Right cardiac atrium (tissue), 5 donors: ENCODE measurements at regions of chr13 and their contacts with region 1.

Region 1: DNA sequence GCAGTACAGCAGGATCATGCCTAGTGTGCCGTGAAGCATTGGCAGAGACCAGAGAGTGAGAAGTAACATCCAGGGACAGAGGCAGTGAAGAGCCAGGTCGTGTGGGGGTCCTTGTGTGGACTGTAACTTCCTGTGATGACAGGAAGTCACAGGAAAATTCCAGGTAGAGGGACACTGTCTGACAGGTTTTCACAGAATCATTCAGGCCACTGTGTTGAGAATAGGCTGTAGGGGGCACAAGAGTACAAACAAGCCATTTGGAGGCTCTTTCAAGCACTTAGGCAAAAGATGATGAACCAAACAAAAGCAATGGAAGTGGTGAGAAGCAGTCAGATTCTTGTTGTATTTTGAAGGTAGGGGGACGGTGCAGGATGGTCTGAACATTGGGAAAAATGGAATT is 46.4 kb downstream of the N4BP2L1 start:
- DNase-seq: no peak
- ATAC-seq: peak; percentile 49 to 62
- H3K4me3 ChIP-seq: no peak overlapping the region
- H3K27ac ChIP-seq: no peak overlapping the region
- H3K4me1 ChIP-seq: no peaks in the 10 kb centered on the region
- H3K27me3 ChIP-seq: no peaks in the 10 kb centered on the region

Region 2: GRCh38 chr13:32211813-32212212 is 169.7 kb before region 1 on chr13:
- intact Hi-C with region 1: no loop called
- DNase-seq: no peak
- ATAC-seq: peak; percentile 54 to 61
- H3K4me3 ChIP-seq: no peak overlapping the region
- H3K27ac ChIP-seq: peak overlapping the region; percentile 82
- H3K4me1 ChIP-seq: no peaks in the 10 kb centered on the region
- H3K27me3 ChIP-seq: no peaks in the 10 kb centered on the region

Region 3: DNA sequence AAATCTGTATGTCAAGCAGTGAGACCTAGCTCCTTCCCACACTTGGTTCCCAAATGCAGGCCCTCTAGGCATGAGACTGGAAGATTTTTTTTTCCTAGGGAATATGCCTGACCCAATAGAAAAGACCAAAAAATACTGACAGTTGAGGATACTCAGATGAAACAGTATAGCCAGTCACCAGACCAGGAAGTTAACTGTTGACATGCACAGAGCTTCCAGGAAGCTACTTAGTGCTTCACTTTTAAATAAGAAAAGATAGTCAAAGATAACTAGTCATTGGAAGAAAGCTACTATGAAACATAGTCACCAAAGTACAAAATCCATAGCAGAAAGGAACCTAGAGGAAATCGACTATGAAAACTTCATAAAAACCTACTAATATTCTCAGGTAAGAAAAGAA is 33.9 kb before region 1 on chr13:
- intact Hi-C with region 1: no loop called
- DNase-seq: no peak
- ATAC-seq: no peak
- H3K4me3 ChIP-seq: no peak overlapping the region
- H3K27ac ChIP-seq: no peak overlapping the region
- H3K4me1 ChIP-seq: no peaks in the 10 kb centered on the region
- H3K27me3 ChIP-seq: no peaks in the 10 kb centered on the region

Region 4: GRCh38 chr13:32427852-32428580 is 46.5 kb after region 1 on chr13 and contains the start of gene N4BP2L1:
- intact Hi-C with region 1: no loop called
- DNase-seq: peak; percentile 67 to 88 (median 87)
- ATAC-seq: peak; percentile 84 to 85
- H3K4me3 ChIP-seq: peak within 1 kb of the TSS; percentile 74
- H3K27ac ChIP-seq: peak within 1 kb of the TSS; percentile 84
- H3K4me1 ChIP-seq: peaks cover 9% of the 10 kb centered on the region
- H3K27me3 ChIP-seq: no peaks in the 10 kb centered on the region
- total RNA-seq, gene N4BP2L1: 4.6 to 6.5 (median 5.0) TPM

Region 5: DNA sequence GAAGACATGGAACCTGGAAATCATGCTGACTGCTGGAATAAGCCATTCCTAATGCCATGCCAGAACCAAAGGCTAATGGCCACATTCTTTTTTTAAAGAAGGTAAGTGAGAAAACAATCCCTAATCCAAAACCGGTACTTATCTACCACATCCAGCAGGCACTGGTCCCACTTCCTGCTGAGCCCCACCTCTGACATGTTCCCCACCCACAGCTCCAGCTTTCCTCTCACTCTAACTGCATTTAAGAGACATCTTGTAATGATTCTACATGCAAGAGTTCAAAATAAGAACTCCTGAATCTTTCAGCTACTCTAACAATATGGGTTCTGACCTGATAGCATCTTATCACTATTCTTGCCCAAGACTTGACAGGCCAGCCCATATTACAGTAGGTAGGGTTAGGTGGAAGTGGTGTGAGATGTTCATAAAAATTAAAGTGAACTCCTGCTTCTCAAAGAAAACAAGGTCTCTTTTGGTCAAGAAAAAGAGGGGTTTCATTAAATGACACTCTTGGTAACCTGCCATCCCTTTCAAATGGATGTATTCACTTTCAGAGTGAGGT is 115.1 kb after region 1 on chr13:
- intact Hi-C with region 1: no loop called
- DNase-seq: no peak
- ATAC-seq: peak; percentile 32 to 69
- H3K4me3 ChIP-seq: no peak overlapping the region
- H3K27ac ChIP-seq: no peak overlapping the region
- H3K4me1 ChIP-seq: peaks cover 3% of the 10 kb centered on the region
- H3K27me3 ChIP-seq: no peaks in the 10 kb centered on the region

Region 6: DNA sequence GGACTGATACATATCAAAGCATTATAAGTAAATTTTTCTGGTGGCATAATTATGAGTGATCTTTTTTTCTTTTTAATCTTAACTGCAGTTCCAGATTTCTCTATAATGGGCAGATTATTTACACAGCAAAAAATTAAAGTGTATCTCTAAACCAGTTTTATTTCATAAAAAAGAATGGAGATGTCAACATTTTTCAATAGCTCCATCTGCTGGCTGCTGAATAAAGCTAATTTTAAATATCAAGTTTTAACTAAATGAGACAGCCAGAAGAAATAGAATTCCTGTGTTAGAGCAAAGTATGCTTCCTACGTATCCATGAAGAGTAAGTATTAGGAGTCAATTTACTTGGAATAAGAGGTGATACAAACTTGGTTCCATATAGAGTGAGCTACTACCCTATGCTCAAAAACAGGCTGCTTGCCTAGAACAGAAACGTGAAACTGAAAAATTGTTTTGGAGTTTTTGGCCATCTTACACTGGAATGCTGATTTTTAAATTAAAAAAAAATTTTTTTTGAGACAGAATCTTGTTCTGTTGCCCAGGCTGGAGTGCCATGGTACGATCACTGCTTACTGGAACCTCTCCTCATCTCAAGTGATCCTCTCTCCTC is 199.7 kb after region 1 on chr13:
- intact Hi-C with region 1: loop called in 3 of 4 experiments (anchors 2 to 10 kb)
- DNase-seq: no peak
- ATAC-seq: no peak
- H3K4me3 ChIP-seq: no peak overlapping the region
- H3K27ac ChIP-seq: no peak overlapping the region
- H3K4me1 ChIP-seq: no peaks in the 10 kb centered on the region
- H3K27me3 ChIP-seq: no peaks in the 10 kb centered on the region